Gastrocnemius medialis (tissue), 4 donors: ENCODE measurements at regions of chr6 and their contacts with region 1.

Region 1: GRCh38 chr6:157021344-157021992 is 244.3 kb downstream of the ARID1B start:
- DNase-seq: peak; percentile 91
- ATAC-seq: peak; percentile 76 to 80
- H3K4me3 ChIP-seq: peak overlapping the region; percentile 81 to 94 (median 86)
- H3K27ac ChIP-seq: peak overlapping the region; percentile 97 to 100 (median 98)
- H3K4me1 ChIP-seq: peaks cover 50 to 57% of the 10 kb centered on the region in 2 donors
- H3K27me3 ChIP-seq: no peaks in the 10 kb centered on the region
- CTCF ChIP-seq: peak; percentile 26 to 53 (median 48)
- POLR2A ChIP-seq: peak; percentile 94 to 98

Region 2: GRCh38 chr6:156686995-156687788 is 334.3 kb before region 1 on chr6:
- in situ Hi-C with region 1: loop called in 2 of 4 experiments (anchors 10 kb)
- intact Hi-C with region 1: loop called (anchors 1 kb)
- DNase-seq: peak; percentile 84 to 90
- ATAC-seq: peak; percentile 81 to 84
- H3K4me3 ChIP-seq: peak overlapping the region; percentile 71 to 91 (median 86)
- H3K27ac ChIP-seq: peak overlapping the region; percentile 96 to 99 (median 99)
- H3K4me1 ChIP-seq: peaks cover 7 to 13% of the 10 kb centered on the region in 2 donors
- H3K27me3 ChIP-seq: no peaks in the 10 kb centered on the region
- CTCF ChIP-seq: peak in 1 of 5 experiments; percentile 10
- POLR2A ChIP-seq: peak; percentile 75 to 85

Region 3: DNA sequence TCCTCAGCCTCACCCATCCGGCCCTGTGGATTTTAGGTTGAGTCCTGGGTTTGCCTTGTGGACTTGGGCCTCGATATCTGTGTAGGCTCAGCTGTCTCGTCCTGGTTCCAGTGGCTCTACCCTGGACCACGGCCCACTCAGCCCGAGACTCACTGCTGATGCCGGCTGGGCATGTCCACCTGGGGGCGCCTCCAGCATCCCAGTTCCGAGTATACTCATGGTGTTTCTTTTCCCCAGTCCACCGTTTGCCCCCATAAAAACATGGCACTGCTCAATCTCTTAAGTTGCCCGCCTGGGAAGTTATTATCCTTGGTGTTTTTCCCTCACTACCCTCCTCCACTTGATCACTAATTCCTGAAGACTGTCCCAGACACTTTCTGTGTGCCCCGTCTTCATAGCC is 145.2 kb before region 1 on chr6:
- in situ Hi-C with region 1: no loop called
- intact Hi-C with region 1: loop called (anchors 2 kb)
- DNase-seq: peak; percentile 18 to 64
- ATAC-seq: peak in 1 of 2 donors; percentile 39
- H3K4me3 ChIP-seq: no peak overlapping the region
- H3K27ac ChIP-seq: peak overlapping the region; percentile 23 to 65 (median 54)
- H3K4me1 ChIP-seq: peaks cover 70 to 74% of the 10 kb centered on the region in 2 donors
- H3K27me3 ChIP-seq: no peaks in the 10 kb centered on the region
- CTCF ChIP-seq: peak in 3 of 5 experiments; percentile 25 to 43 (median 31)
- POLR2A ChIP-seq: no peak

Region 4: GRCh38 chr6:156976216-156977127 is 45.0 kb before region 1 on chr6:
- in situ Hi-C with region 1: no loop called
- intact Hi-C with region 1: loop called (anchors 5 kb)
- DNase-seq: no peak
- ATAC-seq: peak in 1 of 2 donors; percentile 31
- H3K4me3 ChIP-seq: peak overlapping the region; percentile 42 to 47 (median 43)
- H3K27ac ChIP-seq: peak overlapping the region; percentile 65 to 71 (median 67)
- H3K4me1 ChIP-seq: peaks cover 74 to 82% of the 10 kb centered on the region in 2 donors
- H3K27me3 ChIP-seq: no peaks in the 10 kb centered on the region
- CTCF ChIP-seq: no peak
- POLR2A ChIP-seq: no peak